ENCODE measurements at regions of chr6 and their contacts with region 1.

Region 1: DNA sequence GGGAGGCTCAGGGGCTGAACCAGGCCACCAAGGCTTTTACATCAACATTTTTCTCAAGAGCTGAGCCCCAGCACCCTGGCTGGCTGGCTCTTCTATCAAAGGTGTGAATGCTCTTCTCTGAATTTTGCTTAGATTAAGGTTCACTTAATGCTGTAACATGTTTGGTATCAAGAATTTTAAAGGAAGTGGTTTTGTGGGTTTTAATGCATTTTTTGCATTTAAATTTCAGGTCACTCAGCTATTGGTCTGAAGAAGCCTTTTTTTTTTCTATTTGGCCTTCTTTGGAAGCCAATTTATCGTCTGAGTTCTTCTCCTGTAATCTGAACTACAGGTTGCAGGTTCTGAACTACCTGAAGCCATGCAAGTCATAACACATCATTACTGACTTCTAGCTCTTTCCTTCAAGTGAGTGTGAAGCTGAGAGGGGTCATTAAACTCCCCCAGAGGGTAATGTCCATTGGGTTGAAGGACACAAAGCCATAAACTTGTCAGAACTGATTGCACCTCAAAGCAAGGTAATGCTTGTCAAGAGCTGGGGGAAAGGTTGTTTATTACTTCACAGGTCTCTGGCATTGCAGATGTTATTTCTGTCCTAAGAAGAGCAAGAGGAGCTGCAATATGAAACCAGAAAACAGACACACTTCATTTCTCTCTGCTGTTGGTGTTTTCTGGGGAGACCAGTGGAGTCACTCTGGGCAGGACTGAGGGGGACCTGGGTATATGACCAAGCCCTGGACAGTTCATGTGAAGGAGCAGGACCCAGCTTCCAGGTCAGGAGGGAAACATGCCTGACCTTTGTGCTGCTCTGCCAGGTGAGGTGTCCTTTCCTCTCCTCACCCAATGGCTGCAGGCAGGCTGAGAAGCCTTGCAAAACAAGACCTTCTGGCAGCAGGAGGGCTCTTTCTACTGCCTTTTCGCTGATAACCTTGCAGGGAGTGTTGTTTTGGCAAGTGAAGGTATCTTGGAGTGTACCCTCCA is 26.1 kb upstream of the NEDD9 start:
- DNase-seq: peak; percentile 42
- H3K4me3 Mint-ChIP-seq: peak overlapping the region; percentile 14
- H3K27ac Mint-ChIP-seq: peak overlapping the region; percentile 79
- H3K4me1 Mint-ChIP-seq: peaks cover 48% of the 10 kb centered on the region
- H3K27me3 Mint-ChIP-seq: no peaks in the 10 kb centered on the region

Region 2: GRCh38 chr6:11353921-11354389 is 95.4 kb after region 1 on chr6:
- CTCF ChIA-PET with region 1: no interaction called
- POLR2A ChIA-PET with region 1: interaction called, 10 read pairs
- DNase-seq: peak; percentile 50
- H3K4me3 Mint-ChIP-seq: peak overlapping the region; percentile 5
- H3K27ac Mint-ChIP-seq: peak overlapping the region; percentile 58
- H3K4me1 Mint-ChIP-seq: peaks cover 60% of the 10 kb centered on the region
- H3K27me3 Mint-ChIP-seq: no peaks in the 10 kb centered on the region

Region 3: GRCh38 chr6:11496152-11497060 is 237.9 kb after region 1 on chr6:
- CTCF ChIA-PET with region 1: no interaction called
- POLR2A ChIA-PET with region 1: no interaction called
- DNase-seq: peak; percentile 84
- H3K4me3 Mint-ChIP-seq: no peak overlapping the region
- H3K27ac Mint-ChIP-seq: no peak overlapping the region
- H3K4me1 Mint-ChIP-seq: peaks cover 2% of the 10 kb centered on the region
- H3K27me3 Mint-ChIP-seq: no peaks in the 10 kb centered on the region

Measured in activated CD4-positive, alpha-beta T cell treated with anti-CD3 and anti-CD28 coated beads, Interleukin-2, amount 10 ng/mL, durations not matched to agents 7 days and 5 days (primary cell).